ENCODE measurements at regions of chr9 and their contacts with region 1.

Region 1: DNA sequence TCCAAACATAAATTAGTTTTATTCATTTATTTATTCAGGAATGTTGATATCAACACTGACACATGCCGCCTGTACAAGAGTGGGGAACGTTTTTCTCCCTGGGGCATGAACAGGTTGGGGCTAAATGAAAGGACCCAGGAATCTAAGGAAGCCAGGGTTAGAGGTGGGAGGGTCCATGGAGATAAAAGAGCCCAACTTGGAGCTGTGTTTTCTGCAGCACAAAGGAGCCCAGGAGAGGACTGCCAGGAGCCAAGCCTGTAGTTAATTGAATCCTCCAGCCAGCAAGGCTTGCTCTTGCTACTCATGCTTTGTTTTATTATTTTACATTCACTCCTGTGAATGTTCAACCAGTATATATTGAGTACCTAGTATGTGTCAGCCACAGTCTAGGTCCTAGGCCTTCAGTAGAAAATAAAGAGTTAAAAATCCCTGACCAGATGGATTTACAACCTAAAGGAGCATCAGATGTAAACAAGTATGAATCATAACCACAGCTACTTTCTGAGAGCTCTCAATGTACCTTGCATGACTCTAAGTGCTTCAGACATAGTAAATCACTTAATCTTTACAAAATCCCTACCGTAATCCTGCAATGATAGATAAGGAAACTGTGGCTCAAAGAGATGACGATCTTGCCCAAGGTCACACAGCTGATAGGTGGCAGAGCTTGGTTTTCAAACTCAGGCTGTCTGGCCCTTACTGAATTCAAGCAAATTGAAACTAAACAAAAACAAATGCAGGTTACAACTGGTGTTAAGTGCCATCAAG is 69.8 kb downstream of the ASTN2 start:
- DNase-seq: no peak
- ATAC-seq: no peak
- H3K4me3 ChIP-seq: no peak overlapping the region
- H3K27ac ChIP-seq: no peak overlapping the region
- H3K4me1 ChIP-seq: no peaks in the 10 kb centered on the region
- H3K27me3 ChIP-seq: no peaks in the 10 kb centered on the region
- CTCF ChIP-seq: no peak

Region 2: DNA sequence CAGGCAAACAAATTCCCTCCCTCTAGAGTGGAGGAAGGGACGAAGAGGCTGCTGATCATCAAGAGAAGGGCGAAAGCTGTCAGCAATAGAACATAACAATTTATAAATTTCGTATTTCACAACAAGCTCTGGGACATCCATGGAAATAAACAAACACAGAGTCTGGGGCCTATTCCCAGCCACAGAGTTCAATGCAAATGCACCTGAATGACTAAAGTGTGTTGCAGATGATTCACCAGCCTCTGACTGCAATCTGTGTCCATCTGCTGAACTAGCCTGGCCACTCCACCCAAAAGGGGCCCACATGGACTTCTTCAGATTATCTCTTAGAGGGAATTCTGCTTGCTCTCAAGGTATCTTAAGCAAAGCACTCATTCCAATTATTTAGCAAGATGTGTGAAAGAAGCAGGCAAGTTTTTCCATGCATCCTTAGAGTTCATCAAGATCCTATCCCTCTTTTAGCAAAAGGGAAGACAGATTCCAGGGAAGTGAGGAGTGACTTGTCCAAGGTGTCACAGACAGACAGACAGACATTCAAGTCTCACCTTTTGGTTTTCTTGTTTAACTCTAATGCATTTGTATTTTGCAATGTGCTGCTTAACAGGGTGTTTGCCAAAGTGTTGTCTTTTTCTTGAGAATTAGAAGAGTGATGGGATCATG is 1499.3 kb before region 1 on chr9:
- intact Hi-C with region 1: loop called in 1 of 10 experiments (anchors 5 kb)
- DNase-seq: no peak
- ATAC-seq: no peak
- H3K4me3 ChIP-seq: no peak overlapping the region
- H3K27ac ChIP-seq: no peak overlapping the region
- H3K4me1 ChIP-seq: no peaks in the 10 kb centered on the region
- H3K27me3 ChIP-seq: no peaks in the 10 kb centered on the region
- CTCF ChIP-seq: no peak